Activated CD8-positive, alpha-beta T cell treated with anti-CD3 and anti-CD28 coated beads for 36 hours (primary cell): ENCODE measurements at regions of chr11 and their contacts with region 1.

Region 1: DNA sequence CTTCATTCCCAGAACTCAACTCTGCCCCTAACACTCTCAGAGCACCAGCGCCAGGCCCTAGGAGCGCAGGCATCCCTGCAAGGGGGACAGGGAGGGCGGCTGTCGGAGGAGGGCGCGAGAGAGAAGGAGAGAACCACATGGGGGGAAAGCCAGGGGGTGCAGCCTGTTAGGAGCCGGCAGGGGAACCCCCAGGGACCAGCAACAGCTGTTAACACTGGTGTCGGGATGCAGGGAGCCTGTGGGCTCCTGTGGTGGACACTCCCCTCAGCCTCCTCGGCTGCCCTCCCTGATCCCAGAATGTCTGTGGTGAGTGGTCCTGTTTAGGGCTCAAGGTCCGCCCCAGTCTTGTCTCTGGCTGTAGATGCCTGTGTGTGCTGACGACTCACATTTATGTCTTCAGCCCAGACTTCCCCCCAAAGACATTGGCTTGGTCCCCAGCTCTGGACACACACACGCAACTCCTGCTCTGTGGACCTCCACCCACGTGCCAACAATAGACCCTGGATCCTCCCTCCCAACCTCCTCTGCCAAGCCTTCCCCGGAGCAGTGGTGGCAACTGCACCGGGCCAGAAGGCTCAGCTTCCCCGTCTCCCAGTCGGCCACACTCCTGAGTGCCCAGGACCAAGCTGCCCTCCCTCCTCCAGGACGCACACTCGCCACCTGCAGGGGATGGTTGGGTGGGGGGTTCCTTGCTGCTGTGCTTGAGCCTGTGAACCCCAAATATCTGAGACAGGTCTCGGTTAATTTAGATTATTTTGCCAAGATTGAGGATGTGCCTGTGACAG is 817 bp upstream of the IFITM5 start:
- DNase-seq: peak; percentile 68
- ATAC-seq: peak; percentile 14
- H3K4me3 Mint-ChIP-seq: no peak overlapping the region
- H3K27ac Mint-ChIP-seq: no peak overlapping the region
- H3K4me1 Mint-ChIP-seq: peaks cover 49% of the 10 kb centered on the region
- H3K27me3 Mint-ChIP-seq: peaks cover 6% of the 10 kb centered on the region
- CTCF ChIP-seq: no peak

Region 2: DNA sequence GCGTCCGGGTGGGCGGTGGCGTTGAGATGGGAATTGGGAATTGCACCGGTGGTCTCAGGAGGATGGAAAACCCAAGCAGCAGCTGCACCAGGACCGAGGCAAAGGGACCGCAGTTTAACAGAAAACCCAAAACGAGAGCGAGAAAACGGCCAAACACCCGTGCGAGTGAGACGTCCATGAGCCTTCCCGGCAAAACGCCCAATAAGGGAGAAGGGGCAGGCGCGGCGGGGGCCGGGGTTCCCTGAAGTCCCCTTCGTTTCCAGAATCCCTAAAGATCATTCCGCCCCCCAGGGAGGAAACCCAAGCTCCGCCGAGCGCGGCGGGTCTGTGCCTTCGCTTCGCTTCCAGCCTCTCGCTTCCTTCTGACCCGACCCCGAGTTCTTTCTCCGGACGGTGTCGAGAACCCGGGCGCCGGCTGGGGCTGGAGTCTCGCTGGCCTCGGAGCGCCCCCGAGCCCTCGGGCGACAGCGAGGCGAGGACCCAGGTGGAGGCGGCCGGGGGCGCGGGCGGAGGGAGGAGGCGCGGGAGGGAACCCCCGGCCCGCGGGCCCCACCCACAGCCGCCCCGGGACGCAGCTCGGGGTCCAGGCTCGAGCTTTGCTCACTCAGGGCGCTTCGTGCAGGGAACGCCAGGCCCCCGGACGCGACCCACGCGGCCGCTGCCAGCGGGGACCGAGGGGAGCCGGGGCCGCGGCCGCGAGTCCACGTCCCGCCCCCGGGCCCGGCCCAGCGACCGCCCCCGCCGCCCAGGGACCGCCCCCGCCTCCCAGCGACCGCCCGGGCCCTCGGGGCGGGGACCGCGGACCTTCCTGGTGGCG is 11.6 kb before region 1 on chr11 and contains the start of gene PGGHG:
- CTCF ChIA-PET with region 1: interaction called, 44 read pairs
- POLR2A ChIA-PET with region 1: interaction called, 33 read pairs
- intact Hi-C with region 1: no loop called
- DNase-seq: peak; percentile 56
- ATAC-seq: peak; percentile 14
- H3K4me3 Mint-ChIP-seq: peak within 1 kb of the TSS; percentile 97
- H3K27ac Mint-ChIP-seq: peak within 1 kb of the TSS; percentile 98
- H3K4me1 Mint-ChIP-seq: peaks cover 51% of the 10 kb centered on the region
- H3K27me3 Mint-ChIP-seq: no peaks in the 10 kb centered on the region
- CTCF ChIP-seq: no peak
- total RNA-seq, gene PGGHG: 298 to 308 TPM

Region 3: GRCh38 chr11:363948-364761 is 64.0 kb after region 1 on chr11:
- CTCF ChIA-PET with region 1: interaction called, 42 read pairs
- POLR2A ChIA-PET with region 1: interaction called, 3 read pairs
- intact Hi-C with region 1: loop called (anchors 2 kb)
- DNase-seq: peak; percentile 72
- ATAC-seq: peak; percentile 81
- H3K4me3 Mint-ChIP-seq: no peak overlapping the region
- H3K27ac Mint-ChIP-seq: no peak overlapping the region
- H3K4me1 Mint-ChIP-seq: peaks cover 7% of the 10 kb centered on the region
- H3K27me3 Mint-ChIP-seq: peaks cover 27% of the 10 kb centered on the region
- CTCF ChIP-seq: peak; percentile 65

Region 4: DNA sequence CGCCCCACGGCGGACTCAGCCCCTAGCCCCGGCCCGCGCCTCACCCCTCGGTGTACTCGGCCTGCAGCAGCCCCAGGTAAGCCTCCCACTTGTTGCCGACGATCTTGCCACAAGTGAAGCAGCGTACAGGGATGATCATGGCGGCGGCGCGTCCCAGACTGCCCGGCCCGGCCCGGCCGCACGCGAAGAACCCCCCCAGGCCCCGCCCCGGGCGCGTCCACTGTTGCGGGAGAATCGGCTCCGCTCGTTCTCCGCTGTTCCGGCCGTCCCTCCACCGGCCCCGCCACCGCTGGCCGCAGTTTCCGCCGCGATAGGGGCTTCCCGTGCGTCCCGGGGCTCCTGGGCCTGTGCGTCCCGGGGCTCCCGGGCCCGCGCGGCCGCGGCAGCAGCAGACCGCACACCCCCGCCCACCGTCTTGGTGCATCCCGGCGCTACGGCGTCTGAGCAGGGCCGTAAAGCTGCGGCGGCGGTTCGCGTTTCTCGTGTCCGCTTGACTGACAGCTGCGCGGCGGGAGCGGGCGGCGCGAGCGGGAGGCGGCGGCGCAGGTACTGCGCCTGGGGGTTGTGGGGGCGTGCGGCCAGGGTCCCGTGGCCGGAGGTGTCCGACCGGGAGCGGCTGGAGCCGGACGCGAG is 542.3 kb after region 1 on chr11 and contains the starts of genes POLR2L and TSPAN4:
- CTCF ChIA-PET with region 1: no interaction called
- POLR2A ChIA-PET with region 1: no interaction called
- intact Hi-C with region 1: no loop called
- DNase-seq: peak; percentile 92
- ATAC-seq: peak; percentile 79
- H3K4me3 Mint-ChIP-seq: peak within 1 kb of the TSS; percentile 85
- H3K27ac Mint-ChIP-seq: peak within 1 kb of the TSS; percentile 87
- H3K4me1 Mint-ChIP-seq: peaks cover 33% of the 10 kb centered on the region
- H3K27me3 Mint-ChIP-seq: peaks cover 2% of the 10 kb centered on the region
- CTCF ChIP-seq: no peak
- total RNA-seq, gene POLR2L: 83.0 to 89.2 TPM
- total RNA-seq, gene TSPAN4: 15.4 to 16.0 TPM